Transverse colon (tissue), 4 donors: ENCODE measurements at regions of chr10 and their contacts with region 1.

Region 1: GRCh38 chr10:93482145-93482834 is at the start of gene MYOF:
- DNase-seq: peak; percentile 65
- H3K4me3 ChIP-seq: peak within 1 kb of the TSS; percentile 28 to 74 (median 55)
- H3K27ac ChIP-seq: peak within 1 kb of the TSS; percentile 84 to 97 (median 88)
- H3K4me1 ChIP-seq: peaks cover 0 to 28% (median 12%) of the 10 kb centered on the region in 4 donors
- H3K27me3 ChIP-seq: no peaks in the 10 kb centered on the region
- CTCF ChIP-seq: peak; percentile 51 to 79 (median 60)
- EP300 ChIP-seq: no peak
- POLR2A ChIP-seq: peak; percentile 74
- total RNA-seq, gene MYOF: 18.9 to 57.2 (median 50.2) TPM

Region 2: GRCh38 chr10:93368210-93368609 is 114.1 kb before region 1 on chr10:
- in situ Hi-C with region 1: loop called in 1 of 4 experiments (anchors 5 kb)
- intact Hi-C with region 1: no loop called
- DNase-seq: no peak
- H3K4me3 ChIP-seq: no peak overlapping the region
- H3K27ac ChIP-seq: no peak overlapping the region
- H3K4me1 ChIP-seq: no peaks in the 10 kb centered on the region
- H3K27me3 ChIP-seq: no peaks in the 10 kb centered on the region
- CTCF ChIP-seq: no peak
- EP300 ChIP-seq: no peak
- POLR2A ChIP-seq: no peak

Region 3: GRCh38 chr10:93376372-93377293 is 105.7 kb before region 1 on chr10:
- in situ Hi-C with region 1: loop called (anchors 5 kb)
- intact Hi-C with region 1: loop called (anchors 2 kb)
- DNase-seq: peak; percentile 42
- H3K4me3 ChIP-seq: no peak overlapping the region
- H3K27ac ChIP-seq: peak overlapping the region; percentile 44 to 83 (median 66)
- H3K4me1 ChIP-seq: peaks cover 0 to 12% (median 5%) of the 10 kb centered on the region in 4 donors
- H3K27me3 ChIP-seq: no peaks in the 10 kb centered on the region
- CTCF ChIP-seq: peak; percentile 92 to 97 (median 96)
- EP300 ChIP-seq: no peak
- POLR2A ChIP-seq: no peak

Region 4: DNA sequence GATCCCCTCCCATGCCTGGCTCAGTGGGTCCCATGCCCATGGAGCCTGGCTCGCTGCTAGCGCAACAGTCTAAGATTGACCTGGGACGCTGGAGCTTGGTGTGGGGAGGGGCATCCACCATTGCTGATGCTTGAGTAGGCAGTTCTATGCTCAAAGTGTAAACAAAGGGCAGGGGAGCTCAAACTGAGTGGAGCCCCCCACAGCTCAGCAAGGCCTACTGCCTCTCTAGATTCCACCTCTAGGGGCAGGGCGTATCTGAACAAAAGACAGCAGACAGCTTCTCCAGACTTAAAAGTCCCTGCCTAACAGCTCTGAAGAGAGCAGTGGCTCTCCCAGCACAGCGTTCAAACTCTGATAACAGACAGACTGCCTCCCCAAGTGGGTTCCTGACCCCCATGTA is 53.0 kb after region 1 on chr10:
- in situ Hi-C with region 1: no loop called
- intact Hi-C with region 1: no loop called
- DNase-seq: no peak
- H3K4me3 ChIP-seq: no peak overlapping the region
- H3K27ac ChIP-seq: no peak overlapping the region
- H3K4me1 ChIP-seq: no peaks in the 10 kb centered on the region
- H3K27me3 ChIP-seq: no peaks in the 10 kb centered on the region
- CTCF ChIP-seq: no peak
- EP300 ChIP-seq: no peak
- POLR2A ChIP-seq: no peak